ENCODE measurements at regions of chr2 and their contacts with region 1.

Region 1: GRCh38 chr2:190880378-190881073 is at the start of gene GLS:
- DNase-seq: peak; percentile 95 to 97
- ATAC-seq: peak; percentile 86 to 93
- H3K4me3 ChIP-seq: peak within 1 kb of the TSS; percentile 98
- H3K27ac ChIP-seq: peak within 1 kb of the TSS; percentile 93 to 99
- H3K4me1 ChIP-seq: peaks cover 19% of the 10 kb centered on the region; the same call in 2 of the 3 replicates
- CTCF ChIP-seq: no peak
- EP300 ChIP-seq: no peak
- POLR2A ChIP-seq: peak; percentile 96
- RAD21 ChIP-seq: 0 out of 5 replicates have a peak, but pooled peaks of 1 of the 2 experiments have one; percentile 7
- polyA plus RNA-seq, gene GLS: 221 and 269 TPM in 2 replicates

Region 2: DNA sequence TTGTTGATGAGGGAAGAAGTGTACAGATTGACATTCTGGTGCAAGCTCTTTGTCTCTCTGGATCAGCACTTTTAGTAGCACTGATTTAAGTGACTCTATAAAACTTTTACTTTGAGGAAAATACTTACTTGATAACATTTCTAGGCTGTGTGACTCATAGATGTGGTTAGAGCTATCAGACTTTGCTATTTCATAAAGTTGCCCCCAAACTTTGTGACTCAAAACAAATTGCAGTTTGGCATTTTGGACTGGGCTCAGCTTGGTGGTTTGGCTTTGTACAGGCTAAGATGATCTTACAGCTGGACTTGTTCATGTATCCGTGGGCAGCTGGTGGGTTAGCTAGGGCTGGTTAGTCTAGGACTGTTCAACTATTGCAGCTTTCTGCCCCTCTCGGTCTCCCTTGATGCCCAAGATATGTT is 42.0 kb before region 1 on chr2:
- CTCF ChIA-PET with region 1: interaction called, 3 read pairs
- POLR2A ChIA-PET with region 1: interaction called, 14 read pairs
- DNase-seq: peak in 1 of 2 experiments; percentile 57
- ATAC-seq: peak; percentile 25 to 41
- H3K4me3 ChIP-seq: no peak overlapping the region
- H3K27ac ChIP-seq: peak overlapping the region; percentile 80 to 92
- H3K4me1 ChIP-seq: peaks cover 98% of the 10 kb centered on the region
- CTCF ChIP-seq: no peak
- EP300 ChIP-seq: peak; percentile 38 to 54; a peak in 2 of 5 replicates
- POLR2A ChIP-seq: no peak
- RAD21 ChIP-seq: peak in 1 of 2 experiments; percentile 21; a peak in 1 of 5 replicates

Region 3: DNA sequence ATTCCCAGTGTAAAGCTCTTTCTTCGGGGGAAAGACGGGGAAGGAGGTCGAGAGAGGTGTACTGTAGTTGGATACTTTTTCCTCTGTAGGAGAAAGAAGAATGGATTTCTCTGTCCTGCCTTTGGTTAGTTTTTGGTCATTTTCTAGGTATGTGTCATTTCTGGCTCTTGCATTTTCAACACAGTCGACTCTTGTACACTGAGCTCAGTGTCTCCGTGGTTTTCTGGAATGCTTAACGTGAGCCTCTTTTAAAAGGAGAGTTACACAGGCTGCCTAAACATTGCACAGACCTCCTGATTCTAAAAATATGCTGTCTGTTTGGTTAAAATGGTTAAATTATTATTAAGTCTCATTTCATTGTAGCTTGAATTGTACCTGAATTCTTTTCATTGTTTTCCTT is 21.7 kb before region 1 on chr2:
- CTCF ChIA-PET with region 1: interaction called, 6 read pairs
- POLR2A ChIA-PET with region 1: interaction called, 45 read pairs
- DNase-seq: no peak
- ATAC-seq: peak in 1 of 2 experiments; percentile 53; a peak in 3 of 6 replicates
- H3K4me3 ChIP-seq: peak overlapping the region; percentile 17; the same call in 2 of the 3 replicates
- H3K27ac ChIP-seq: peak overlapping the region; percentile 87 to 91
- H3K4me1 ChIP-seq: peaks cover 76% of the 10 kb centered on the region
- CTCF ChIP-seq: no peak
- EP300 ChIP-seq: no peak
- POLR2A ChIP-seq: no peak
- RAD21 ChIP-seq: no peak

Region 4: GRCh38 chr2:190863946-190864345 is 16.6 kb before region 1 on chr2:
- CTCF ChIA-PET with region 1: interaction called, 6 read pairs
- POLR2A ChIA-PET with region 1: interaction called, 45 read pairs
- DNase-seq: no peak
- ATAC-seq: no peak; a peak in 1 of 6 replicates
- H3K4me3 ChIP-seq: no peak overlapping the region
- H3K27ac ChIP-seq: peak overlapping the region; percentile 33 to 91; a peak in 5 of 6 replicates
- H3K4me1 ChIP-seq: peaks cover 67% of the 10 kb centered on the region
- CTCF ChIP-seq: no peak
- EP300 ChIP-seq: no peak
- POLR2A ChIP-seq: no peak
- RAD21 ChIP-seq: no peak

Measured in A549 (cell line).